ENCODE measurements at regions of chr6 and their contacts with region 1.

Region 1: GRCh38 chr6:53335208-53335994 is 13.3 kb downstream of the ELOVL5 start:
- DNase-seq: peak; percentile 53 to 93 (median 72)
- ATAC-seq: peak; percentile 77
- H3K4me3 ChIP-seq: peak overlapping the region; percentile 60
- H3K4me3 Mint-ChIP-seq: peak overlapping the region; percentile 89
- H3K27ac ChIP-seq: peak overlapping the region; percentile 97 to 98
- H3K27ac Mint-ChIP-seq: peak overlapping the region; percentile 99
- H3K4me1 ChIP-seq: peaks cover 77% of the 10 kb centered on the region
- H3K4me1 Mint-ChIP-seq: peaks cover 94% of the 10 kb centered on the region
- H3K27me3 ChIP-seq: no peaks in the 10 kb centered on the region
- H3K27me3 Mint-ChIP-seq: no peaks in the 10 kb centered on the region
- CTCF ChIP-seq: no peak

Region 2: DNA sequence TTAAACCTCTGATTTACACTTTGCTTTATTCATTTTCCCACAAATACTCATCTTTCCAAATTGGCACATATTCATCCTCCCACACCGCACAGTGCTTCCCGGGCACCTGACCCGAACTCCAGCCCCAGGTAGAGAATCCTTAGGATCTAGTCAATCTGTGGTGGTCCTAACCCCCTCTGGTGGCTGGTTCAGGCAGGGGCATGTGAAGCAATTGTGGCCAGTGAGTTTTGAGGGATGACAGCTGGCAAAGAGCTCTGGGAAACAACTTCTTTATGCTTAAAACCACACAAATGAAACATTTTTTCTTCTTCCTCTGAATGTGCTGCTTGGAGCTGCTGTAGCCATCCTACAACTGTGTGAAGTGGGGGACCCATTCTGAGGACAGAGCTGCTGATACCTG is 41.3 kb before region 1 on chr6:
- CTCF ChIA-PET with region 1: interaction called, 7 read pairs
- POLR2A ChIA-PET with region 1: interaction called, 7 read pairs
- intact Hi-C with region 1: loop called in 1 of 2 experiments (anchors 2 kb)
- DNase-seq: peak in 3 of 14 experiments; percentile 22 to 46 (median 40)
- ATAC-seq: no peak
- H3K4me3 ChIP-seq: no peak overlapping the region
- H3K4me3 Mint-ChIP-seq: no peak overlapping the region
- H3K27ac ChIP-seq: peak overlapping the region in 1 of 2 donors; percentile 23
- H3K27ac Mint-ChIP-seq: peak overlapping the region; percentile 73
- H3K4me1 ChIP-seq: peaks cover 53% of the 10 kb centered on the region
- H3K4me1 Mint-ChIP-seq: peaks cover 89% of the 10 kb centered on the region
- H3K27me3 ChIP-seq: no peaks in the 10 kb centered on the region
- H3K27me3 Mint-ChIP-seq: no peaks in the 10 kb centered on the region
- CTCF ChIP-seq: peak; percentile 33

Region 3: GRCh38 chr6:53300656-53301551 is 34.5 kb before region 1 on chr6:
- CTCF ChIA-PET with region 1: interaction called, 12 read pairs
- POLR2A ChIA-PET with region 1: interaction called, 34 read pairs
- intact Hi-C with region 1: loop called in 1 of 2 experiments (anchors 1 kb)
- DNase-seq: peak in 8 of 14 experiments; percentile 12 to 72 (median 36)
- ATAC-seq: peak; percentile 13
- H3K4me3 ChIP-seq: peak overlapping the region; percentile 8
- H3K4me3 Mint-ChIP-seq: peak overlapping the region; percentile 35
- H3K27ac ChIP-seq: peak overlapping the region in 1 of 2 donors; percentile 51
- H3K27ac Mint-ChIP-seq: peak overlapping the region; percentile 83
- H3K4me1 ChIP-seq: peaks cover 54% of the 10 kb centered on the region
- H3K4me1 Mint-ChIP-seq: peaks cover 86% of the 10 kb centered on the region
- H3K27me3 ChIP-seq: no peaks in the 10 kb centered on the region
- H3K27me3 Mint-ChIP-seq: no peaks in the 10 kb centered on the region
- CTCF ChIP-seq: no peak

Region 4: GRCh38 chr6:53322188-53323029 is 13.0 kb before region 1 on chr6:
- CTCF ChIA-PET with region 1: no interaction called
- POLR2A ChIA-PET with region 1: interaction called, 3 read pairs
- intact Hi-C with region 1: loop called in 1 of 2 experiments (anchors 2 kb)
- DNase-seq: no peak
- ATAC-seq: no peak
- H3K4me3 ChIP-seq: no peak overlapping the region
- H3K4me3 Mint-ChIP-seq: no peak overlapping the region
- H3K27ac ChIP-seq: no peak overlapping the region
- H3K27ac Mint-ChIP-seq: peak overlapping the region; percentile 61
- H3K4me1 ChIP-seq: peaks cover 32% of the 10 kb centered on the region
- H3K4me1 Mint-ChIP-seq: peaks cover 79% of the 10 kb centered on the region
- H3K27me3 ChIP-seq: no peaks in the 10 kb centered on the region
- H3K27me3 Mint-ChIP-seq: no peaks in the 10 kb centered on the region
- CTCF ChIP-seq: no peak

Region 5: GRCh38 chr6:53359072-53359842 is 23.9 kb after region 1 on chr6:
- CTCF ChIA-PET with region 1: interaction called, 3 read pairs
- POLR2A ChIA-PET with region 1: interaction called, 13 read pairs
- intact Hi-C with region 1: no loop called
- DNase-seq: peak; percentile 76 to 95 (median 87)
- ATAC-seq: peak; percentile 77
- H3K4me3 ChIP-seq: peak overlapping the region; percentile 80
- H3K4me3 Mint-ChIP-seq: peak overlapping the region; percentile 87
- H3K27ac ChIP-seq: peak overlapping the region; percentile 93 to 96
- H3K27ac Mint-ChIP-seq: peak overlapping the region; percentile 93
- H3K4me1 ChIP-seq: peaks cover 43% of the 10 kb centered on the region
- H3K4me1 Mint-ChIP-seq: peaks cover 41% of the 10 kb centered on the region
- H3K27me3 ChIP-seq: no peaks in the 10 kb centered on the region
- H3K27me3 Mint-ChIP-seq: no peaks in the 10 kb centered on the region
- CTCF ChIP-seq: no peak

Region 6: GRCh38 chr6:53417140-53417539 is 81.7 kb after region 1 on chr6:
- CTCF ChIA-PET with region 1: no interaction called
- POLR2A ChIA-PET with region 1: no interaction called
- intact Hi-C with region 1: no loop called
- DNase-seq: no peak
- ATAC-seq: no peak
- H3K4me3 ChIP-seq: no peak overlapping the region
- H3K4me3 Mint-ChIP-seq: no peak overlapping the region
- H3K27ac ChIP-seq: no peak overlapping the region
- H3K27ac Mint-ChIP-seq: no peak overlapping the region
- H3K4me1 ChIP-seq: no peaks in the 10 kb centered on the region
- H3K4me1 Mint-ChIP-seq: no peaks in the 10 kb centered on the region
- H3K27me3 ChIP-seq: no peaks in the 10 kb centered on the region
- H3K27me3 Mint-ChIP-seq: no peaks in the 10 kb centered on the region
- CTCF ChIP-seq: no peak

Measured in CD4-positive, alpha-beta T cell (primary cell).